Endothelial cell of umbilical vein (primary cell): ENCODE measurements at regions of chr7 and their contacts with region 1.

Region 1: GRCh38 chr7:26449175-26450165 is 157.8 kb downstream of the SNX10 start:
- DNase-seq: peak; percentile 96
- H3K4me3 ChIP-seq: no peak overlapping the region
- H3K27ac ChIP-seq: peak overlapping the region; percentile 80
- H3K4me1 ChIP-seq: peaks cover 37% of the 10 kb centered on the region
- H3K27me3 ChIP-seq: no peaks in the 10 kb centered on the region
- CTCF ChIP-seq: no peak
- POLR2A ChIP-seq: peak; percentile 54

Region 2: GRCh38 chr7:26417911-26418413 is 31.5 kb before region 1 on chr7:
- CTCF ChIA-PET with region 1: interaction called, 8 read pairs
- POLR2A ChIA-PET with region 1: no interaction called
- dilution Hi-C with region 1: no loop called
- intact Hi-C with region 1: loop called (anchors 1 kb)
- DNase-seq: peak; percentile 98
- H3K4me3 ChIP-seq: peak overlapping the region in 1 of 3 experiments; percentile 30
- H3K27ac ChIP-seq: peak overlapping the region; percentile 99
- H3K4me1 ChIP-seq: peaks cover 23% of the 10 kb centered on the region
- H3K27me3 ChIP-seq: no peaks in the 10 kb centered on the region
- CTCF ChIP-seq: no peak
- POLR2A ChIP-seq: no peak